SK-N-SH (cell line): ENCODE measurements at regions of chr15 and their contacts with region 1.

Region 1: DNA sequence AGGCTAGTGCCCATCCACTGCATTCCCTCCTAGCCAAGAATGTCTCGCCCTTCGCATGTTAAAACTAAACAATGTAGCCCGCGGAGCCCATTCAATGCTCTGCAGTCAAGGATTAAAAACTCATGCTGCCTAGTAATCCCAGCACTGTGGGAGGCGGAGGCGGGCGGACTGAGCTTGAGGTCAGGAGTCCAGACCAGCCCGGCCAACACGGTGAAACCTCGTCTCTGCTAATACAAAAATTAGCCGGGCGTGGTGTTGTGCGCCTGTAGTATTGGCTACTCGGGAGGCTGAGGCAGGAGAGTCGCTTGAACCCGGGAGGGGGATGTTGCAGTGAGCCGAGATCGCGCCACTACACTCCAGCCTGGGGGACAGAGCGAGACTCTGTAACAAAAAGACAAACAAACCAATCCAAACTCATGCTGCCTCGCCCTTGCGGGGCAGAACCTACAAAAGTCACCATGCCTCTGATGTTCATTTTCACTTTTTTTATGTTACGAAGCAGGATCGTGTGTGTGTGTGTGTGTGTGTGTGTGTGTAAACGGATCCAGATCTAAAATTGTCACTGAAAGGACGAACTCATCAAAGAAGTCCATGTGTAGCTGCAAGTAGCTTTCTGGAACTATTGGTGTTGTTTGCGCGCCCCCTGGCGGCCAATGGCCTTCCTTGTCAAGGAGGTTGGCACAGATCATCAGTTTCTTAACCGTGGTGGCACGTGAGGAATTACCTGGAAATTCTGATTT is 54.8 kb upstream of the SPESP1 start:
- DNase-seq: peak; percentile 78
- H3K4me3 ChIP-seq: peak overlapping the region in 1 of 2 experiments; percentile 52; a peak in 2 of 4 replicates
- H3K27ac ChIP-seq: no peak overlapping the region
- H3K4me1 ChIP-seq: no peaks in the 10 kb centered on the region
- H3K27me3 ChIP-seq: peaks cover 11% of the 10 kb centered on the region; the same call in 1 of the 2 replicates
- CTCF ChIP-seq: peak; percentile 93
- EP300 ChIP-seq: no peak
- RAD21 ChIP-seq: peak; percentile 97

Region 2: GRCh38 chr15:68298882-68299381 is 576.6 kb before region 1 on chr15:
- CTCF ChIA-PET with region 1: no interaction called
- POLR2A ChIA-PET with region 1: no interaction called
- DNase-seq: no peak
- H3K4me3 ChIP-seq: no peak overlapping the region
- H3K27ac ChIP-seq: 0 out of 4 replicates have a peak overlapping the region, but pooled peaks of 1 of the 2 experiments have one; percentile 10
- H3K4me1 ChIP-seq: peaks cover 0 to 4% of the 10 kb centered on the region in 2 experiments; a peak in 2 of 4 replicates
- H3K27me3 ChIP-seq: no peaks in the 10 kb centered on the region
- CTCF ChIP-seq: no peak
- EP300 ChIP-seq: no peak
- RAD21 ChIP-seq: no peak

Region 3: DNA sequence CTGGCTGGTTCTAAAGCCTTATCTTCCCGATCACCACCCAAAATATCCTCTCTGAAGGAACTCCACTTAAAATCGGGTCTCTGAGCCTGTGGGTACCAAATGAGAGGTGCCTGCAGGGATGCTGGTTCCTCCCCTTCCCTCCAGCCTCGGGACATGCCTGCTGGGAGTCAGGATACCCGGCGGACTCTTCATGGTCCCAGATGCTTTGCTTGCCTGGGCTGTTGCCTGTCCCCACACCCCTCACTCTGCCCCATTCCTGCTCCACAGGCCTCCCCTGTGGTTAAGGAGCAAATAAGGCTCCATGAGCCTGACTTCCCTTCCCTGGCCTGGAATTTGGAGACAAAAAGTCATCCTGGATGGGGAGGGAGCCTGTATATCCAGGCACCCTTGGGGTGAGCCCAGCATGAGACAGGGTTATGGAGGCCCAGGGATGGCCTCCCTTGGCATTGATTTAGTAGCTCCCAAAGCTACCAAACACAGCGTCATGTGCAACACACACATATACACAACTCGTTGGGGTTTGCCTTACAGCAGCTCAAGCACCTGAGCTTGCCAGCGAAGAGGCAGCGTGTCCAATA is 309.1 kb before region 1 on chr15:
- CTCF ChIA-PET with region 1: interaction called, 37 read pairs
- POLR2A ChIA-PET with region 1: no interaction called
- DNase-seq: no peak
- H3K4me3 ChIP-seq: no peak overlapping the region
- H3K27ac ChIP-seq: no peak overlapping the region
- H3K4me1 ChIP-seq: no peaks in the 10 kb centered on the region
- H3K27me3 ChIP-seq: no peaks in the 10 kb centered on the region
- CTCF ChIP-seq: no peak
- EP300 ChIP-seq: no peak
- RAD21 ChIP-seq: no peak

Region 4: DNA sequence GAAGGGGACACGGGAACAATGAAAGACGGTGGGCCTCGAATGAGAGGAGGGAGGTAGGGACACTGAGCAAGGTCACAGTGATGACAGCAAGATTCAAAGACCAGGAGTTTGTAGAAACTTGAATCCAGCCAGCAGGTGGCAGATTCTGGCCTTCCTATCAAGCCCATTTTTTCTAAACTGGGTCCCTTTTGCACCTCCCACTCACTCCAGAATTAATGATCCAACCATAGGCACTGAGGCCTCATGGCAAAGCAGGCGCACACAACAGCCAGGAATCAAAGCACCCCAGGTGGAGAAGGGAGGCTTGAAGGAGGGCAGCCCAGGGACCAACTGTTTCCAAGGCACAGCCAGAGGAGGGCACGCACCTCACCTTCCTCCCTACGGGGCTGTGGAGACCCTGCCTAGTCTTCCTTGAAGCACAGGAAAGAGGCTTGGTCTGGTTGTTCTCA is 145.1 kb before region 1 on chr15:
- CTCF ChIA-PET with region 1: interaction called, 90 read pairs
- POLR2A ChIA-PET with region 1: interaction called, 4 read pairs
- DNase-seq: peak; percentile 53
- H3K4me3 ChIP-seq: no peak overlapping the region
- H3K27ac ChIP-seq: no peak overlapping the region
- H3K4me1 ChIP-seq: peaks cover 0 to 8% of the 10 kb centered on the region in 2 experiments; a peak in 1 of 4 replicates
- H3K27me3 ChIP-seq: no peaks in the 10 kb centered on the region; the same call in 1 of the 2 replicates
- CTCF ChIP-seq: peak; percentile 60
- EP300 ChIP-seq: no peak
- RAD21 ChIP-seq: peak; percentile 77

Region 5: DNA sequence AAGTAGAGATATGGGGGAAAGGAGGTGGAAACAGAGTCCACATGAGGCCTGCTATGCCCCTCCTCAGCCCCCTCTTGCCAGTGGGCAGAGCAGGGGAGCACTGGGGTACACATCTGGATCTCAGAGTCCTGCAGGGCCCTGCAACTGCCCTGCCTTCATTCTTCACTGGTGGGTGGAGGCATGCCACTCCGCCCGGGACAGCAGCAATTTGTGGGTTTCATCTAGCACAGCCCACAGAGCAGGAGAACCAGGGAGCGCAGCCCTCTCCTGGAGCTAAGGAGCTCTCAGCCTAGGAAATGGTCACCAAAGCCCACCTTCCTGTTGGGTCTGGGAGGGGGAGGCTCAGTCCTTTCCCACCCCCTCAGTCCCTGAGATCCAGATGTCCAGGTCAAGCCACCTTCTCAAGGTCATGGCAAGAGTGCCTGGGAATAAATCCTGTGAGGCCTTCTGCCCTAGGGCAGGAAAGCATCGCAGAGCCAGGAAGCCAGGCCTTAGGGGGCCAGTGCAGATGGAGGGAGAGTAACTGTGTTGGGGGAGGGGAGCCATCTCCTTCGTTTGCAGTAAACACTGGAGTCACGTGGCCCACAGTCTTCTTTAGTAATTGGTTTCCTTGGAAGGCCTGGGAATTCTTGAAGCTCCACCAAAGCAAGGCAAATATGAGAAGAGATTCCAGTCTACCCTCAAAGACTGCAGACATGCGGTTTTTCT is 85.9 kb before region 1 on chr15:
- CTCF ChIA-PET with region 1: interaction called, 19 read pairs
- POLR2A ChIA-PET with region 1: interaction called, 3 read pairs
- DNase-seq: peak; percentile 46
- H3K4me3 ChIP-seq: no peak overlapping the region
- H3K27ac ChIP-seq: no peak overlapping the region; a peak in 1 of 4 replicates
- H3K4me1 ChIP-seq: peaks cover 0 to 18% of the 10 kb centered on the region in 2 experiments; a peak in 2 of 4 replicates
- H3K27me3 ChIP-seq: no peaks in the 10 kb centered on the region
- CTCF ChIP-seq: no peak
- EP300 ChIP-seq: no peak
- RAD21 ChIP-seq: no peak

Region 6: DNA sequence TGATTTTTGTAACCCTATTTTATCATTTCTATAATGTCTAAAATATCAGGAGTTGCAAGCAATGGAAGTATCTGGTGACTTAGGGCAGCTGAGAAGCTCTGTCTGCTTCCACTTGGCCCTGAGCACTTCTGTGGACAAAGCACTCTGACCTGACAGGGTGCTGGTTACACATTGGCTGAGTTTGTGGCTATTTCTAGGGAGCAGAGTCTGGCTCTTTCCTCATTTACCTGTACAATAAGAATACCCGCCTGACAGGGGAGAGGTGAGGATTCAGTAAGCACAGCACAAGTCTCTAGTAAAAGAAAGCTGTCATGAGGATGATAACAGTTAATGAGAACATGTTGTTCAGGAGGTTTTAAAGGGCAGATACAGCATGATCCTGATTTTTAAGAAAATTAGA is 21.5 kb after region 1 on chr15:
- CTCF ChIA-PET with region 1: interaction called, 14 read pairs
- POLR2A ChIA-PET with region 1: no interaction called
- DNase-seq: no peak
- H3K4me3 ChIP-seq: no peak overlapping the region
- H3K27ac ChIP-seq: no peak overlapping the region
- H3K4me1 ChIP-seq: no peaks in the 10 kb centered on the region
- H3K27me3 ChIP-seq: peaks cover 31% of the 10 kb centered on the region; the same call in 1 of the 2 replicates
- CTCF ChIP-seq: no peak
- EP300 ChIP-seq: no peak
- RAD21 ChIP-seq: no peak